CD4-positive, alpha-beta memory T cell (primary cell): ENCODE measurements at regions of chr3 and their contacts with region 1.

Region 1: GRCh38 chr3:195850857-195851543 is 39.3 kb upstream of the MUC4 start:
- DNase-seq: peak; percentile 83 to 89 (median 88)
- H3K4me3 ChIP-seq: no peak overlapping the region
- H3K4me3 Mint-ChIP-seq: peak overlapping the region in 5 of 8 donors; percentile 40 to 63 (median 50)
- H3K27ac ChIP-seq: no peak overlapping the region
- H3K27ac Mint-ChIP-seq: peak overlapping the region in 2 of 7 donors; percentile 6 to 32
- H3K4me1 ChIP-seq: peaks cover 5% of the 10 kb centered on the region
- H3K4me1 Mint-ChIP-seq: peaks cover 5 to 8% (median 6%) of the 10 kb centered on the region in 4 donors
- H3K27me3 ChIP-seq: no peaks in the 10 kb centered on the region
- H3K27me3 Mint-ChIP-seq: peaks cover 0 to 4% of the 10 kb centered on the region in 2 donors

Region 2: GRCh38 chr3:194333212-194333980 is 1517.6 kb before region 1 on chr3:
- CTCF ChIA-PET with region 1: no interaction called
- POLR2A ChIA-PET with region 1: no interaction called
- intact Hi-C with region 1: loop called (anchors 10 kb)
- DNase-seq: peak; percentile 77 to 87 (median 84)
- H3K4me3 ChIP-seq: peak overlapping the region in 1 of 2 donors; percentile 38
- H3K4me3 Mint-ChIP-seq: peak overlapping the region; percentile 35 to 75 (median 64)
- H3K27ac ChIP-seq: no peak overlapping the region
- H3K27ac Mint-ChIP-seq: no peak overlapping the region
- H3K4me1 ChIP-seq: peaks cover 6% of the 10 kb centered on the region
- H3K4me1 Mint-ChIP-seq: peaks cover 0 to 4% (median 2%) of the 10 kb centered on the region in 4 donors
- H3K27me3 ChIP-seq: peaks cover 12% of the 10 kb centered on the region
- H3K27me3 Mint-ChIP-seq: peaks cover 14 to 30% of the 10 kb centered on the region in 2 donors

Region 3: DNA sequence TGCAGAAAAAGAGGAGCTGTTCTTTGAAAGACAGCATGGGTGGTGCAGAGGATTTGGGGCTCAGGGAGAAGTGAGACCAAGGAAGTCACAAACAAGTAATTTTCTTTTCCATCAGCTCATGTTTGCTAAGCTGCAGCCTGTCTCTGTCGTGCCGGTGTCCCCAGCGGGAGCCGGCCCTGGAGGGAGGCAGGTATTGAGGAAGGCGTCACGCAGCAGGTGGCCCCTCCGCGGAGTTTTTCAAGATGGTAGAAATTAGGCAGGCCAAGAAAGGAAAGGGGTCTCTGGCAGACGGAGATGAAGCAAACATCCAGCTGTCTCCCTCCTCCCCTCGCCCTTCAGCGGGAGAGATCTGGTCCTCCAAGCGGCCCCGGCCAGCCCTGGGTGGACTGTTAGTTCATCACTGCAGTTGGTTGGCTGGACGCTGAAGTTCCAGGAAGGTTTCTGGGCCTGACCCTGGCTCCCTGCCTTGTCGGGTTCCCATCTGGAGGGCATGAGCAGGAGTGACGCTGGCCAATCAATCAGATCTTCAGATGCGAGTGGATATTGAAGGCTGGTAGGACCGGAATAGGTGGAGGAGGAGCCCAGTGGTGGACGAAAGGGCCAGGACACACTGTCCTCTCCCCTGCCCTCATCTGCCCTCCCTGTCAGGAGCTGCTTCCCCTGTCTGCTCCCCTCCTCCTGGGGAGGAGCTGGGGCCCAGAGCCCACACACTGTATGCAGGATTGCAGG is 11.6 kb before region 1 on chr3:
- CTCF ChIA-PET with region 1: interaction called, 49 read pairs
- POLR2A ChIA-PET with region 1: interaction called, 4 read pairs
- intact Hi-C with region 1: no loop called
- DNase-seq: no peak
- H3K4me3 ChIP-seq: no peak overlapping the region
- H3K4me3 Mint-ChIP-seq: no peak overlapping the region
- H3K27ac ChIP-seq: no peak overlapping the region
- H3K27ac Mint-ChIP-seq: no peak overlapping the region
- H3K4me1 ChIP-seq: no peaks in the 10 kb centered on the region
- H3K4me1 Mint-ChIP-seq: no peaks in the 10 kb centered on the region
- H3K27me3 ChIP-seq: no peaks in the 10 kb centered on the region
- H3K27me3 Mint-ChIP-seq: peaks cover 0 to 3% of the 10 kb centered on the region in 2 donors

Region 4: GRCh38 chr3:195894780-195895607 is 44.0 kb after region 1 on chr3:
- CTCF ChIA-PET with region 1: interaction called, 40 read pairs
- POLR2A ChIA-PET with region 1: no interaction called
- intact Hi-C with region 1: no loop called
- DNase-seq: peak; percentile 68 to 81 (median 75)
- H3K4me3 ChIP-seq: peak overlapping the region; percentile 25 to 77
- H3K4me3 Mint-ChIP-seq: peak overlapping the region; percentile 88 to 98 (median 92)
- H3K27ac ChIP-seq: peak overlapping the region; percentile 86
- H3K27ac Mint-ChIP-seq: peak overlapping the region; percentile 92 to 96 (median 94)
- H3K4me1 ChIP-seq: peaks cover 47% of the 10 kb centered on the region
- H3K4me1 Mint-ChIP-seq: peaks cover 28 to 53% (median 39%) of the 10 kb centered on the region in 4 donors
- H3K27me3 ChIP-seq: no peaks in the 10 kb centered on the region
- H3K27me3 Mint-ChIP-seq: no peaks in the 10 kb centered on the region

Region 5: GRCh38 chr3:196192036-196192523 is 341.1 kb after region 1 on chr3:
- CTCF ChIA-PET with region 1: interaction called, 3 read pairs
- POLR2A ChIA-PET with region 1: no interaction called
- intact Hi-C with region 1: loop called (anchors 10 kb)
- DNase-seq: peak; percentile 47 to 83 (median 59)
- H3K4me3 ChIP-seq: peak overlapping the region in 1 of 2 donors; percentile 34
- H3K4me3 Mint-ChIP-seq: peak overlapping the region in 7 of 8 donors; percentile 33 to 85 (median 66)
- H3K27ac ChIP-seq: peak overlapping the region; percentile 75
- H3K27ac Mint-ChIP-seq: peak overlapping the region; percentile 95 to 99 (median 97)
- H3K4me1 ChIP-seq: peaks cover 47% of the 10 kb centered on the region
- H3K4me1 Mint-ChIP-seq: peaks cover 14 to 54% (median 22%) of the 10 kb centered on the region in 4 donors
- H3K27me3 ChIP-seq: no peaks in the 10 kb centered on the region
- H3K27me3 Mint-ChIP-seq: no peaks in the 10 kb centered on the region